ENCODE measurements at regions of chr7 and their contacts with region 1.

Region 1: GRCh38 chr7:45923290-45923689 is 2.2 kb upstream of the IGFBP3 start:
- DNase-seq: peak in 4 of 5 donors; percentile 28 to 45 (median 37)
- H3K4me3 ChIP-seq: no peak overlapping the region
- H3K4me3 Mint-ChIP-seq: peak overlapping the region; percentile 60 to 76 (median 72)
- H3K27ac ChIP-seq: no peak overlapping the region
- H3K27ac Mint-ChIP-seq: peak overlapping the region in 5 of 7 donors; percentile 36 to 90 (median 47)
- H3K4me1 ChIP-seq: peaks cover 36% of the 10 kb centered on the region
- H3K4me1 Mint-ChIP-seq: peaks cover 17 to 46% (median 24%) of the 10 kb centered on the region in 4 donors
- H3K27me3 ChIP-seq: peaks cover 9% of the 10 kb centered on the region
- H3K27me3 Mint-ChIP-seq: peaks cover 31% of the 10 kb centered on the region in 2 donors

Region 2: DNA sequence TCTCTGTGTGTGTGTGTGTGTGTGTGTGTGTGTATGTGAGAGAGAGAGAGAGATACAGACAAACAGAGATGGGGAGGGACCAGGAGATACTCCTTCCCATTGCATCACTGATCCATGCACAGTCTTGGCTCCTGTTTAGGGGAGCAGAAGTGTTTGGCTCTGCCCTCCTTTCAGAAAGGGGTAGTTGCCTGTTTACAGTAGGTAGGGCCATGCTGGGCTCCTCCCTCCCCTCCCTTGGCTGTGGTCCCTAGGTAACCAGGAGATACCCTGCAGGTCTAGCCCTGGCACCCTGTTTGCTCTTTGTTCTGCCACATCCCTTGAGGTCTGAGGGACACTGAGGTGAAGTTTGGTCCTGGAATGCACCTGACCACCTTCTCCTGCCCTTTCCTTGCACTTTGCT is 670.4 kb before region 1 on chr7:
- CTCF ChIA-PET with region 1: no interaction called
- POLR2A ChIA-PET with region 1: no interaction called
- intact Hi-C with region 1: no loop called
- DNase-seq: no peak
- H3K4me3 ChIP-seq: no peak overlapping the region
- H3K4me3 Mint-ChIP-seq: no peak overlapping the region
- H3K27ac ChIP-seq: no peak overlapping the region
- H3K27ac Mint-ChIP-seq: no peak overlapping the region
- H3K4me1 ChIP-seq: no peaks in the 10 kb centered on the region
- H3K4me1 Mint-ChIP-seq: no peaks in the 10 kb centered on the region
- H3K27me3 ChIP-seq: no peaks in the 10 kb centered on the region
- H3K27me3 Mint-ChIP-seq: peaks cover 14 to 26% of the 10 kb centered on the region in 2 donors

Region 3: DNA sequence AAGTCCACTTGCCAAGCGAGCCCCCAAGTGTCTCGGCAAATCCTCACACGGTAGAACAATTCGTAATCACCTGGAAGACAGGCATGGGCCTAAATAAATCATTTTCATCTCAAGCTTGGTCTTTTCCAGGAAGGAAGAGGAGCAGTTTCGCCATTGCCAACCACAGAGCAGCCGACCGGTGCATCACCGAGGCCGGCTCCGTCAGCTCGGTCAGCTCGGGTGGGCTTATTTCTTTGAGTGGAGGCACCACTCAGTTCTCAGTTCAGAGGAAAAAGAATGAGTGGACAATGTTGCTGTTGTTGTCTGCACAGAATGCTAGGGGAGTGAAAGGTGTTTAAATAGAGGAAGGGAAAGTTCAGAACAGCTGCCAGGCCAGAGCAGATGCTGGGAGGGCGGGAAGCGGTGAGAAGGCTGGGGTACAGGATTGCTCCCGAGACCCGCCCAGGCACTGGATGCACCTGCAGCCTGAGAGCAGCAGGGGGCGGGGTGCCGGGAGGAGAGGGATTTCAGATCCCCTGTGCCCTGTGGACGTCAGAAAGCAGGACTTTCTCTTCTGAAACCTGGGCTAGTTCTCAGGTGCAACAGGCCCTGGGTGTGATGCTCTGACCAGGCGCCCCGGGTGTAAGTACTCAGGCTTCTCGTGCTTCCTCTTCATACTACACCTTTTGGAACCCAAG is 15.5 kb after region 1 on chr7:
- CTCF ChIA-PET with region 1: interaction called, 11 read pairs
- POLR2A ChIA-PET with region 1: interaction called, 10 read pairs
- intact Hi-C with region 1: loop called (anchors 2 kb)
- DNase-seq: no peak
- H3K4me3 ChIP-seq: no peak overlapping the region
- H3K4me3 Mint-ChIP-seq: peak overlapping the region in 3 of 8 donors; percentile 17 to 74 (median 30)
- H3K27ac ChIP-seq: no peak overlapping the region
- H3K27ac Mint-ChIP-seq: peak overlapping the region in 1 of 7 donors; percentile 33
- H3K4me1 ChIP-seq: peaks cover 8% of the 10 kb centered on the region
- H3K4me1 Mint-ChIP-seq: peaks cover 11 to 36% (median 27%) of the 10 kb centered on the region in 4 donors
- H3K27me3 ChIP-seq: no peaks in the 10 kb centered on the region
- H3K27me3 Mint-ChIP-seq: peaks cover 2 to 4% of the 10 kb centered on the region in 2 donors

Region 4: GRCh38 chr7:46115410-46115809 is 192.1 kb after region 1 on chr7:
- CTCF ChIA-PET with region 1: no interaction called
- POLR2A ChIA-PET with region 1: no interaction called
- intact Hi-C with region 1: loop called (anchors 10 kb)
- DNase-seq: no peak
- H3K4me3 ChIP-seq: no peak overlapping the region
- H3K4me3 Mint-ChIP-seq: no peak overlapping the region
- H3K27ac ChIP-seq: no peak overlapping the region
- H3K27ac Mint-ChIP-seq: no peak overlapping the region
- H3K4me1 ChIP-seq: no peaks in the 10 kb centered on the region
- H3K4me1 Mint-ChIP-seq: no peaks in the 10 kb centered on the region
- H3K27me3 ChIP-seq: no peaks in the 10 kb centered on the region
- H3K27me3 Mint-ChIP-seq: no peaks in the 10 kb centered on the region

Region 5: DNA sequence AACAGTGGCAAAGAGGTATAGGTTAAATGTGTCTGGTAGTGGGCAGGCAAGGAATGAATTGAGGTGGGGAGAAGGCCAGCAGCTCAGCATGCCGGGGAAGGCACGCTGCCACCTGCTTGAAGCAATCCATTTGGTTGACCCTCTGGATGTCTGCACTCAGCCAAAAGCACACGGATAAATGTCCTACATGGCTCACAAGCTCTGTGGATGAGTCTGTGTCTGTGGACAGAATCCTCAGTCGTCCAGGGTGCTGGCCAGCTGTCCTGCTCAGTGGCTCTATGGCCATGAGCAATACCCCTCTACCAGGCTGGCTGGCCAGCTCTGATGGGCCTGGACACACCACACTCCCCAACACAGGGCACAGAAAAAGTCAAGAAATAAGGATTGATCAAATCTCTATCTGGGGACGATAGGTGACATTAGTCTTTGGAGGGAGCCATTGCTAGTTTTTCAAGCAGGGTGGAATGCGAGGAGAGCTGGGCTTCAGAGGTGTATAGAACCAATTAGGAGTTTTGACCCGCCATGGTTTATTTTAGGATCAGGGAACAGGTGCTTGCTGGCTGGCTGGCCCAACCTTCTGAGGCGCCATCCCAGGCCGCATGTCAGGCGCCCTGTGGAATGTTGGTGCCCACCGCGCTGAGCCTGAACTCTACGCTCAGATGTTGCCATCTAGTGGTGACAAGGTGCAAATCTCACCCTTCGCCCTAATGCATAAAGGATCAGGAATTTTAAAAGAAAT is 1165.2 kb after region 1 on chr7:
- CTCF ChIA-PET with region 1: interaction called, 12 read pairs
- POLR2A ChIA-PET with region 1: no interaction called
- intact Hi-C with region 1: loop called (anchors 1 kb)
- DNase-seq: peak; percentile 2 to 36 (median 5)
- H3K4me3 ChIP-seq: no peak overlapping the region
- H3K4me3 Mint-ChIP-seq: no peak overlapping the region
- H3K27ac ChIP-seq: no peak overlapping the region
- H3K27ac Mint-ChIP-seq: peak overlapping the region in 1 of 7 donors; percentile 33
- H3K4me1 ChIP-seq: no peaks in the 10 kb centered on the region
- H3K4me1 Mint-ChIP-seq: no peaks in the 10 kb centered on the region
- H3K27me3 ChIP-seq: no peaks in the 10 kb centered on the region
- H3K27me3 Mint-ChIP-seq: peaks cover 0 to 1% of the 10 kb centered on the region in 2 donors

Measured in CD4-positive, alpha-beta memory T cell (primary cell).